ENCODE measurements at regions of chr20 and their contacts with region 1.

Region 1: DNA sequence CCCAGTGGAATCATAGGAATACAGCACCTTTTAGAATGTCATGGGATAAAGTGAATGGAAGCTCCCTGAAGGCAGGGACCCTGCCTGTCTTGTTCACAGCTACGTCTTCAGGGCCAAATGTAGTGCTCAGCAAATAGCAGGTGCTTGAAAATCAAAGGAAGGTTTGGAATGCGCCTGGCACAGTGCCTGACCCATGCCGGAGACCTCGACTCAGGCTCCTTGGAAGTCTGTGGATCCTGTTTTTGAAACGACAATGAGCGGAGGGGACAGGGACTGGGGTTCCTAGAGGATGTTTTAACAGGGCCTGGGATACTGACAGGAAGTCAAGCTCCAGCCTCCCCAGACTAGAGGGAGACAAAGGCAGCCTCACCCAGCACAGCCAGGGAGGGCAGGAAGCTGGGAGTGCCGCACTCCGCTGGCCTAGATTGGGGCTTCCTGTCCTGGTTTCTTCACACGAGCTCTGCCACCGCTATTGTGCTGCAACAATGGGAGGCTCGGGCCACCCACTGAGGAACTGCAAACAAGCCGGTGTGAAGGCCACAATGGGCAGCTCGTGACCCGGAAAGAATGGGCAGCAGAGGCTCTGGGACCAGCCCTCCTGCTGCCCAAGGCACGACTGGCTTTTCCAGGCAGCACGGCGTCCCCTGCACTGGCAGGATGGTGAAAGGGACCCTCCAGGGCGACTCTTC is 76.7 kb downstream of the PREX1 start:
- DNase-seq: no peak
- ATAC-seq: 0 out of 2 replicates have a peak, but pooled peaks have one; percentile 33
- H3K4me3 ChIP-seq: no peak overlapping the region
- H3K27ac ChIP-seq: no peak overlapping the region
- H3K4me1 ChIP-seq: peaks cover 7% of the 10 kb centered on the region
- H3K27me3 ChIP-seq: no peaks in the 10 kb centered on the region
- CTCF ChIP-seq: no peak

Region 2: DNA sequence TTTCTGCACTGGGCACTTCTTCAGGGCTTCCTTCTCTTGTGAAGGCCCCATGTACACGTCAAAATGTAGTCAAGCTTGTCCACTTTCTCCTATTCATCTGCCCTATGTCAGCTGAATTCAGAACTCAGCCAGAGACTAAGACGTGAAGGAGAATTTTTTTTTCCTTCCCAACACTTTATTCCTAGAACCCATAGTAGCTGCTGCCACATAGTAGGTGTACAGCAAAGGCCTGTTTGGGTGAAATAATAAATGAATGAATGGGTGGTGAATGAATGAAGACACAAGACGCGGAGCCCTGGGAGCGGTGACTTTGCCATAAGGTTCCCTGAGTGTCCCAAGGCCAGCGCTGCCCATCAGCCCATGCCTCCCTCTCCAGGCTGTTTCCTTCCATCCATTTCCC is 547.3 kb before region 1 on chr20:
- CTCF ChIA-PET with region 1: no interaction called
- POLR2A ChIA-PET with region 1: interaction called, 10 read pairs
- in situ Hi-C with region 1: no loop called
- intact Hi-C with region 1: no loop called
- DNase-seq: no peak
- ATAC-seq: no peak
- H3K4me3 ChIP-seq: no peak overlapping the region
- H3K27ac ChIP-seq: no peak overlapping the region
- H3K4me1 ChIP-seq: no peaks in the 10 kb centered on the region
- H3K27me3 ChIP-seq: peaks cover 2% of the 10 kb centered on the region; the same call in 1 of the 2 replicates
- CTCF ChIP-seq: no peak

Measured in Panc1 (cell line).